CD8-positive, alpha-beta T cell (primary cell): ENCODE measurements at regions of chr11 and their contacts with region 1.

Region 1: GRCh38 chr11:102007567-102008437 is 39.4 kb upstream of the CFAP300 start:
- DNase-seq: peak in 2 of 9 experiments; percentile 31 to 49
- ATAC-seq: no peak
- H3K4me3 ChIP-seq: no peak overlapping the region
- H3K4me3 Mint-ChIP-seq: no peak overlapping the region
- H3K27ac ChIP-seq: no peak overlapping the region
- H3K27ac Mint-ChIP-seq: no peak overlapping the region
- H3K4me1 ChIP-seq: no peaks in the 10 kb centered on the region
- H3K4me1 Mint-ChIP-seq: no peaks in the 10 kb centered on the region
- H3K27me3 ChIP-seq: peaks cover 0 to 2% of the 10 kb centered on the region in 2 experiments
- H3K27me3 Mint-ChIP-seq: peaks cover 12% of the 10 kb centered on the region
- CTCF ChIP-seq: peak; percentile 65

Region 2: GRCh38 chr11:101996111-101996510 is 11.7 kb before region 1 on chr11:
- CTCF ChIA-PET with region 1: interaction called, 14 read pairs
- POLR2A ChIA-PET with region 1: no interaction called
- intact Hi-C with region 1: no loop called
- DNase-seq: no peak
- ATAC-seq: no peak
- H3K4me3 ChIP-seq: no peak overlapping the region
- H3K4me3 Mint-ChIP-seq: no peak overlapping the region
- H3K27ac ChIP-seq: no peak overlapping the region
- H3K27ac Mint-ChIP-seq: no peak overlapping the region
- H3K4me1 ChIP-seq: no peaks in the 10 kb centered on the region
- H3K4me1 Mint-ChIP-seq: no peaks in the 10 kb centered on the region
- H3K27me3 ChIP-seq: no peaks in the 10 kb centered on the region
- H3K27me3 Mint-ChIP-seq: no peaks in the 10 kb centered on the region
- CTCF ChIP-seq: no peak

Region 3: DNA sequence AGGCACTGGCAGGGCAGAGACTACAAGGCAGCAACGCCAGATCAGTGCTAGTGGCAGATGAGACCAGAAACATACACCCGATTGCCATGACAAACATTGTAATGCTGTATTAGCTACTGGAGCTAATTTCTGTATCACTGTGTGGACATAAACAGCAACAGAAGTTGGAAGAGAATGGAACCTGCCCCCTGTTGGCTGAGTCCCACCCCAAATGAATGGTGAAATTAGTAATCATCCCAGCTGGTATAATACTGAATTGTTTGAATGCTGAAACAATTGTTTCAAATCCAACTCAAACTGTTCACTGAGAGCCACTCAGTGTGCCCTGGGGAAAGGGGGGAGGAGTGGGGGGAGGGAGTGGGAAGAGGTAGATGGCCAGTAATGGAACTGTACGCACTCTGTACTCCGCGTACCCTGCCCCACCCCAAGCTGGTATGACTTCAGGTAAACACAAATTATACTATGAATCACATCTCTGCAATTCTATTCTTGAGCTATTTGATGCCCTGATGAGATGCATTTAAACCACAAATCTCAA is 298.3 kb after region 1 on chr11:
- CTCF ChIA-PET with region 1: no interaction called
- POLR2A ChIA-PET with region 1: no interaction called
- intact Hi-C with region 1: no loop called
- DNase-seq: peak in 2 of 9 experiments; percentile 38 to 53
- ATAC-seq: peak; percentile 55
- H3K4me3 ChIP-seq: no peak overlapping the region
- H3K4me3 Mint-ChIP-seq: peak overlapping the region; percentile 40
- H3K27ac ChIP-seq: peak overlapping the region; percentile 33 to 62
- H3K27ac Mint-ChIP-seq: peak overlapping the region; percentile 91
- H3K4me1 ChIP-seq: peaks cover 56% of the 10 kb centered on the region
- H3K4me1 Mint-ChIP-seq: peaks cover 60% of the 10 kb centered on the region
- H3K27me3 ChIP-seq: no peaks in the 10 kb centered on the region
- H3K27me3 Mint-ChIP-seq: no peaks in the 10 kb centered on the region
- CTCF ChIP-seq: no peak